Dorsolateral prefrontal cortex (tissue), 120 donors: ENCODE measurements at regions of chr7 and their contacts with region 1.

Region 1: DNA sequence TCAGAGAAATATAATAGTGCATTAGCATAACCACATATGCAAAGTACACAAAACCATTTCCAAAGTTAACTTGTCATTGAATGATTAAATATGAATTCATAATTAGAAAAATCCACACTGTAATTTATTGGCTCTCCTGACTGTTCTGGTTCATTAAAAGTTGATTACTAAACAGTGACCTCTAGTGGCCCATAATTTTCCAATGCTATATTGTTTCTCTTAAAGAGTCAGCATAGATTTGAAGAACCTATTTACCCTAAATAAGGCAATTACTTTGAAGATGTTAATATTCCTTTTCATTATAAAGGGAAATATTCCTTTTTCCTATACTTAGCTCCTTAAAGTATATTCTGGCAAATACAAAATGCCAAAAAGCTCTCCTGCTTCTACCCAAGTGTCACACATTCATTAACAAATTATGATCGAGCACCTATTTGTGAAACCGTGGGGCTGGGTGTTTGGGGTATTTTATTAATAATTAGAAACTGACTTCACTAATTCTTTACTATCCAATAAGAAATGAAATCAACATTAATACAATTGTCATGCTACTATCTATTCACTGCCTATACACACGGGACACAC is 86.2 kb downstream of the HIBADH start:
- DNase-seq: no peak
- H3K4me3 ChIP-seq: no peak overlapping the region
- H3K27ac ChIP-seq: no peak overlapping the region
- H3K27me3 ChIP-seq: no peaks in the 10 kb centered on the region
- CTCF ChIP-seq: peak; percentile 55 to 88 (median 74)

Region 2: GRCh38 chr7:27196287-27196767 is 380.1 kb before region 1 on chr7:
- intact Hi-C with region 1: loop called in 1 of 2 experiments (anchors 5 kb)
- DNase-seq: peak; percentile 57 to 93 (median 80)
- H3K4me3 ChIP-seq: no peak overlapping the region
- H3K27ac ChIP-seq: no peak overlapping the region
- H3K27me3 ChIP-seq: peaks cover 13 to 98% (median 94%) of the 10 kb centered on the region in 45 donors
- CTCF ChIP-seq: peak; percentile 47 to 93 (median 78)

Region 3: GRCh38 chr7:27204851-27205337 is 371.6 kb before region 1 on chr7:
- intact Hi-C with region 1: loop called (anchors 5 kb)
- DNase-seq: no peak
- H3K4me3 ChIP-seq: no peak overlapping the region
- H3K27ac ChIP-seq: no peak overlapping the region
- H3K27me3 ChIP-seq: peaks cover 21 to 99% (median 89%) of the 10 kb centered on the region in 45 donors
- CTCF ChIP-seq: no peak

Region 4: GRCh38 chr7:27210441-27211083 is 365.9 kb before region 1 on chr7:
- intact Hi-C with region 1: loop called (anchors 5 kb)
- DNase-seq: peak in 5 of 10 donors; percentile 23 to 47 (median 31)
- H3K4me3 ChIP-seq: peak overlapping the region in 29 of 59 donors; percentile 2 to 53 (median 28)
- H3K27ac ChIP-seq: no peak overlapping the region
- H3K27me3 ChIP-seq: peaks cover 21 to 99% (median 89%) of the 10 kb centered on the region in 45 donors
- CTCF ChIP-seq: peak; percentile 32 to 81 (median 70)

Region 5: GRCh38 chr7:27921081-27921836 is 344.8 kb after region 1 on chr7:
- intact Hi-C with region 1: loop called in 1 of 2 experiments (anchors 10 kb)
- DNase-seq: no peak
- H3K4me3 ChIP-seq: peak overlapping the region in 27 of 59 donors; percentile 1 to 47 (median 22)
- H3K27ac ChIP-seq: no peak overlapping the region
- H3K27me3 ChIP-seq: no peaks in the 10 kb centered on the region
- CTCF ChIP-seq: peak; percentile 56 to 89 (median 75)